Calu3 (cell line): ENCODE measurements at regions of chr1 and their contacts with region 1.

Region 1: DNA sequence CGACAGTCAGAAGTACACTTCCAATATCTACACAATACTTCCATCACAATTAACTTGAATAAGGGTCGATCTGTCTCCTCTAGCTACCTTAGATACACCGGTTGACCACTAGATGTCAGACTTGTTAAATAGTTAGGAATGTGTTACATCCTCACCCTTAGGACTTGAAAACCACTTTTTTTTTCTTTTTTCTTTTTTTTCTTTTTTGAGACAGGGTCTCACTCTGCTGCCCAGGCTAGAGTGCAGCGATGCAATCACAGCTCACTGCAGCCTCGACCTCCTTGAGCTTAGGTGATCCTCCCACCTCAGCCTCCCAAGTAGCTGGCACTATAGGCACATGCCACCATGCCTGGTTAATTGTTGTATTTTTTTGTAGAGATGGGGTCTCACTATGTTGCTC is 120.4 kb upstream of the GREM2 start:
- DNase-seq: peak; percentile 20
- H3K4me3 Mint-ChIP-seq: no peak overlapping the region
- H3K27ac Mint-ChIP-seq: no peak overlapping the region
- H3K4me1 Mint-ChIP-seq: peaks cover 9% of the 10 kb centered on the region
- H3K27me3 Mint-ChIP-seq: no peaks in the 10 kb centered on the region
- CTCF ChIP-seq: peak; percentile 40

Region 2: GRCh38 chr1:240803151-240803550 is 70.8 kb after region 1 on chr1:
- CTCF ChIA-PET with region 1: no interaction called
- intact Hi-C with region 1: no loop called
- DNase-seq: peak; percentile 38
- H3K4me3 Mint-ChIP-seq: no peak overlapping the region
- H3K27ac Mint-ChIP-seq: peak overlapping the region; percentile 39
- H3K4me1 Mint-ChIP-seq: peaks cover 23% of the 10 kb centered on the region
- H3K27me3 Mint-ChIP-seq: no peaks in the 10 kb centered on the region
- CTCF ChIP-seq: no peak

Region 3: DNA sequence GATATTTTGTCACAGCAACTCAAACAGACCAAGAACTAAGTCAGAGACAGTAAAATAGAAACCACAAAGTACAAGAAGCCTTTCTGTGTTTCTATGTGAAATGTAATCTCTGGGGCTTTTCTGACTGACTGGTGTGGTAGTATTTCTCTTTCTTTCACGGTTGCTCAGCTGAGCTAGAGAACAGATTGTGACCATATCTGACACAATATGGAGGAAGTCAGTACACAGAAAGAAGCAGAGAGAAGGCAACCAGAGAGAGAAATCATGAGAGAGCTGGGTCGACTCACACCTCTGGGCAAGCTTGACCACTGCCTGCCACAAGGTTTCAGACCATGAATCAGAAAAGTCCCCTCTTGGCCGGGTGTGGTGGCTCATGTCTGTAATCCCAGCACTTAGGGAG is 88.4 kb after region 1 on chr1:
- CTCF ChIA-PET with region 1: no interaction called
- intact Hi-C with region 1: no loop called
- DNase-seq: no peak
- H3K4me3 Mint-ChIP-seq: no peak overlapping the region
- H3K27ac Mint-ChIP-seq: no peak overlapping the region
- H3K4me1 Mint-ChIP-seq: no peaks in the 10 kb centered on the region
- H3K27me3 Mint-ChIP-seq: no peaks in the 10 kb centered on the region
- CTCF ChIP-seq: no peak

Region 4: DNA sequence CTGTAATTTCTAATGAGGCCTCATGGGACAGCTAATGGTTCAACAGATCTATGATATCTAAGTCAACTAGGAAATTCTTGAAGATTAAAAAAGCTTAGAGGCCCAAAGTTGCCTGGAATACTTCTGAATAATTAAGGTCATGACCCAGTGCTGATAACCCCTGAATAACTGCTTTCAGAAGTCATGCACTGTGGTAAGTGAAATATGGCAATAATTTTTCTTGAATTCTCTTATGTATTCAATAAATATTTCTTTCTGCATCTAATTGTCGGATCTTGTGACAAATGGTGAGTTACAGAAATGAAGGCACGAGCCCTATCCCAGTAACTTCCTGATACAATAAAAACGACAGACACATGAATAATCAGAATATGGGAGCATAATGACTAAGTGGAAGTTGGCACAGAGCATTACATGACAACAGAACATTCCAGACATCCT is 98.8 kb after region 1 on chr1:
- CTCF ChIA-PET with region 1: no interaction called
- intact Hi-C with region 1: loop called (anchors 10 kb)
- DNase-seq: no peak
- H3K4me3 Mint-ChIP-seq: no peak overlapping the region
- H3K27ac Mint-ChIP-seq: no peak overlapping the region
- H3K4me1 Mint-ChIP-seq: peaks cover 8% of the 10 kb centered on the region
- H3K27me3 Mint-ChIP-seq: no peaks in the 10 kb centered on the region
- CTCF ChIP-seq: no peak

Region 5: GRCh38 chr1:240878631-240879030 is 146.2 kb after region 1 on chr1:
- CTCF ChIA-PET with region 1: interaction called, 13 read pairs
- intact Hi-C with region 1: loop called (anchors 1 kb)
- DNase-seq: no peak
- H3K4me3 Mint-ChIP-seq: no peak overlapping the region
- H3K27ac Mint-ChIP-seq: no peak overlapping the region
- H3K4me1 Mint-ChIP-seq: no peaks in the 10 kb centered on the region
- H3K27me3 Mint-ChIP-seq: no peaks in the 10 kb centered on the region
- CTCF ChIP-seq: no peak

Region 6: GRCh38 chr1:240946926-240947325 is 214.5 kb after region 1 on chr1:
- CTCF ChIA-PET with region 1: interaction called, 6 read pairs
- intact Hi-C with region 1: loop called (anchors 1 kb)
- DNase-seq: peak; percentile 73
- H3K4me3 Mint-ChIP-seq: no peak overlapping the region
- H3K27ac Mint-ChIP-seq: no peak overlapping the region
- H3K4me1 Mint-ChIP-seq: peaks cover 11% of the 10 kb centered on the region
- H3K27me3 Mint-ChIP-seq: no peaks in the 10 kb centered on the region
- CTCF ChIP-seq: peak; percentile 65

Region 7: GRCh38 chr1:241432241-241432640 is 699.9 kb after region 1 on chr1:
- CTCF ChIA-PET with region 1: no interaction called
- intact Hi-C with region 1: no loop called
- DNase-seq: no peak
- H3K4me3 Mint-ChIP-seq: no peak overlapping the region
- H3K27ac Mint-ChIP-seq: no peak overlapping the region
- H3K4me1 Mint-ChIP-seq: no peaks in the 10 kb centered on the region
- H3K27me3 Mint-ChIP-seq: no peaks in the 10 kb centered on the region
- CTCF ChIP-seq: no peak

Region 8: DNA sequence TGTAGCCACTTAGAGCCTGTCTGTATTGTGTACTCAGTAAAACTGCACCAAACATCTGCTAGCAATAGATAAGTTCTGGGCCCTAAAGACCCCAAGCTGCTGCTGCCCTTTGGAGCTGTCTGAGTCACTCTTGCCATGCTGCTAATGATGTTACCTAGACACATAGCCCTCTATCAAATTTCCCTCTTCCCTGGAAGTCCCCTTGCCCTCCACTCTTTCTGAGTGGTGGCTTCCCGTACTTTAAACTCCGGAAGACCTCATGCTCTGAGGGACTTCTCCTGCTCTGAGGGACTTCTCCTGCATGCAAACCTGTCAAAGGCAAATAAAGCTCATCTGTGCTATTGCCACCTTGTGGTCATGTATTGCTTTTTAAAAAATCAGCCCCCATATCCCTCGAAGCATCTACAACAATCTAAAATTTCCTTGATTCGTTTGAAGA is 753.2 kb after region 1 on chr1:
- CTCF ChIA-PET with region 1: interaction called, 7 read pairs
- intact Hi-C with region 1: loop called (anchors 5 kb)
- DNase-seq: peak; percentile 21
- H3K4me3 Mint-ChIP-seq: no peak overlapping the region
- H3K27ac Mint-ChIP-seq: no peak overlapping the region
- H3K4me1 Mint-ChIP-seq: peaks cover 25% of the 10 kb centered on the region
- H3K27me3 Mint-ChIP-seq: no peaks in the 10 kb centered on the region
- CTCF ChIP-seq: peak; percentile 73